Common myeloid progenitor, CD34-positive (primary cell): ENCODE measurements at regions of chr11 and their contacts with region 1.

Region 1: DNA sequence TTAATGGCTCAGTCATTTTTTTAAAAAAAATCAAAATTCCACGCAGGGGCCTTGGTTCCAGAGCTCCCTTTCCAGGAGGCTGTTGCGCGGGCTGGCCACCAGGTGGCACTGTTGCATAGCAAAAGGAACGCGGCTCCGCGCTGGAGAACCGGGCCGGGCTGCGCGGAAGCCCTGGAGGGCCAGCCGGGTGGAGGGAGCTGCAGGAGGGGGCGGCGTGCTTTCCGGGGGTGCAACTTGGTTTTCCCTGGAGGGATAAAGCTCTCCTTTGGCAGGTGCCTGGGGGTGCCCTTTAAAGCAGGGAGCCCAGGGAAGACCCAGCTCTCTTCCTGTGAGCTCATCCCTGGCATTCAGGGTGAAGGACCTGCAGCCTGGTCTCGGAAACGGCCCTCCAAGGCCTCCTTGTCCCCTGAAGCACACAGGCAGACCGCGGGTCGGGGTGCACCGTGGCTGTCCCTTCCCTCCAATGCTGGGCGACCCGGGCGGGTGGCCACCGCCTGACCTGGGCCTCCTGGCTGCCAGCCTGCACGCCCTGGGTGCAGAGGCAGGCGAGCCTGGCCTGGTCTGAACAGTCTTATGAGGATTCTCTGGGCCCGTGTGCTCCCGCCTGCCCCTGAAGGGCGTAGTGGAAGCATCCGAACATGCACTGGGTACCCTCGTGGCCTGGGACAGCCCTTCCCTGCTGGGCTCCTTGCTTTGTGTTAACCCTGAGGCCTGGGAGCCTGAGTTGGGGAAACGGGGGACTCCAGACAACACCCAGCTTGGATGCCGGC is 23.4 kb downstream of the KRTAP5-5 start:
- DNase-seq: peak; percentile 56 to 77 (median 73)
- H3K4me3 ChIP-seq: peak overlapping the region in 1 of 7 experiments; percentile 48
- H3K27ac ChIP-seq: no peak overlapping the region
- H3K4me1 ChIP-seq: peaks cover 2 to 49% (median 41%) of the 10 kb centered on the region in 4 experiments
- H3K27me3 ChIP-seq: peaks cover 0 to 3% (median 0%) of the 10 kb centered on the region in 5 experiments

Region 2: GRCh38 chr11:1682225-1682905 is 29.4 kb after region 1 on chr11:
- CTCF ChIA-PET with region 1: interaction called, 10 read pairs
- POLR2A ChIA-PET with region 1: no interaction called
- DNase-seq: peak in 2 of 3 donors; percentile 50 to 57
- H3K4me3 ChIP-seq: no peak overlapping the region
- H3K27ac ChIP-seq: no peak overlapping the region
- H3K4me1 ChIP-seq: peaks cover 0 to 10% (median 7%) of the 10 kb centered on the region in 4 experiments
- H3K27me3 ChIP-seq: no peaks in the 10 kb centered on the region

Region 3: DNA sequence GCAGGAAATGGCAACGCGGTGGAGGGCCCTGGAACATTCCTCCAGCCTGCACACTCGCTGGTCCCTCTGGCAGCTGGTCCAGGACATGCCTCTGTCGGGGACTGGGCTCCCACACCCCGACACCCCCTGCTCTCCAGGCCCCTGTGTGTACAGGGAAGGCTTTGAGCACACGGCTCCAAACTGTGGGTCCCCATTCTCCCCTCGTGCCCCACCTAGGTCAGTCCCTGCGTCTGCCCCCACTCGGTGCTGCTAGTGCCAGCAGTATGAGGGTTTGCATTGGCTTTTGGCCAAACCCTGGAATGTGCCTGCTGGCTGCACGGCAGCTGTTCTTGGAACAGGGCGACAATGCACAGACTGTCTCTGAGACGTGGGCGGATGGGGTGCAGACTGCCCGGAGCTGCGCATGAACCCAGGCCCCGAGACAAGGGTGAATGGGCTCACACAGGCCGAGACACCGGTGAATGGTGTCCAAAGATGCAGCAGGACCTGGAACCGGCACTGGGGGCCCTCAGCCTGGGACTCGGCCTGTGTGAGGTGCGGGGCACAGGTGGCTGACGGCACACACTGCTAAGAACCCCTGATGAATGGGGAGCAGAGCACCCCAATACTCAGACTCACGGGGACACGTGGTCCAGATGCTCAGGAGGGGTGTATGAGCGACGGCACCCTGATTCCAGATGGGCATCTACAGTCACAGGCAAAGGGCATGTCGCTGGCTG is 174.3 kb after region 1 on chr11:
- CTCF ChIA-PET with region 1: interaction called, 135 read pairs
- POLR2A ChIA-PET with region 1: no interaction called
- DNase-seq: no peak
- H3K4me3 ChIP-seq: no peak overlapping the region
- H3K27ac ChIP-seq: no peak overlapping the region
- H3K4me1 ChIP-seq: peaks cover 0 to 11% (median 8%) of the 10 kb centered on the region in 4 experiments
- H3K27me3 ChIP-seq: peaks cover 0 to 13% (median 0%) of the 10 kb centered on the region in 5 experiments

Region 4: DNA sequence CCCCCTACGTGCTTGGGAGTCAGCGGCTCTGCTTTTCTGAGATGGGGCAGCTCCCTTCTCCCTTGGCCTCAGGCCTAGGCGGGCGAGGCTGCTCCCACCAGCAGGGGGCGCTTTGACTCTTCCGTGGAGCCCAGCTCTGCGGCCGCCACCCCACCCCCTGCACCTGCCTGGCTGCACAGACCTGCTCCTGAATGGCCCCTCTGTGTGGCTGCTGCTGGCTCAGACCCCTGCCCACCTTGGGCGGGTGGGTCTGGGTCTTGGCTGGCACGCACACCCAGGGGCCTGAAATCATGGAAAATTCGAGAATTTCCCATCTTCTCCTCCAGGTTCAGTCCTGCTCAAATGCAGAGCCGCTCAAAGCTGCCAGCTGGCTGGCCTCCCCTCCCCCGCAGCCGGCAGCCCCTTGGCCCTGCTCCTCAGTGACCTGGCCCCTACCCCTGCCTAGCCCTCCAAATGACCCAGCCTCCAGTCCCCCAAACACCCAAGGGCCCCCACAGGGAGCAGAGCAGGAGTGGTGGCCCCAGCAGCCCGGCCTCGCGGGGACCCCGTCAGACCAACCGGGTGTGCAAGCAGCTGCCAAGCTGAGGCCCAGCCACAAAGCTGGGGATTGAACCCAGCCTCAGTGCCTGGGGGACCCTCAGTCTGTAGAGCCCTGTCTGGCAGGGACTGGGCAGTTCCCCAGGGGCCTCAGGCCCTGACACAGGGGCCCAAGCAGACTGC is 229.7 kb after region 1 on chr11:
- CTCF ChIA-PET with region 1: interaction called, 11 read pairs
- POLR2A ChIA-PET with region 1: no interaction called
- DNase-seq: peak; percentile 67 to 83 (median 81)
- H3K4me3 ChIP-seq: no peak overlapping the region
- H3K27ac ChIP-seq: no peak overlapping the region
- H3K4me1 ChIP-seq: peaks cover 0 to 55% (median 49%) of the 10 kb centered on the region in 4 experiments
- H3K27me3 ChIP-seq: no peaks in the 10 kb centered on the region